Heart right ventricle (tissue), 16 donors: ENCODE measurements at regions of chr16 and their contacts with region 1.

Region 1: DNA sequence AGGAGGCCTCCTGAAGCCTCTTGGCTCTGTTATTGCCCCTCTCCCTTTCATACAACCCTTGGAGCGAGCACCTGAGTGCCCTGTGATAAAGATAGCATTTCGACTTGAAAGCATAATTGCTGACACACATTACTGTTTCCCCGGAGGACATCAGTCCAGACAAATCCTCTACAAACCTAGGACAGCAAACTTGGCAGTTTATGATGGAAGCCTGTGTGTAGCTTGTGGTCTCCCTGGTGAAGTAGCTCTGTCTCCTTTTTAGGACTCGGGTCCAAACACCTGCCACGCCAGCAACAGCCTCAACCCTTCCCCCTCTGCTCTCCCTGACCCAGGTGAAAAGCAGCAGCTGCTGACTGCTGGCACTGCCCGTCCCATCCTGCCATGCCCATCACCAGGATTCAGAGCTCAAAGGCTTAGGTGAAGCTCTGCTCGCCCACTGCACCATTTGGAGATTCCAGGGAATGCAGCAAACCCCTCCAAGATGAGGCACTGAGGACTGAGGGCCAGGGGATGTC is 55.9 kb downstream of the IRX6 start:
- DNase-seq: no peak
- ATAC-seq: peak in 6 of 8 donors; percentile 16 to 59 (median 27)
- H3K4me3 ChIP-seq: no peak overlapping the region
- H3K27ac ChIP-seq: peak overlapping the region in 6 of 10 donors; percentile 55 to 73 (median 66)
- H3K4me1 ChIP-seq: peaks cover 0 to 21% (median 6%) of the 10 kb centered on the region in 9 donors
- H3K27me3 ChIP-seq: no peaks in the 10 kb centered on the region
- CTCF ChIP-seq: no peak

Region 2: GRCh38 chr16:53945996-53946395 is 1433.9 kb before region 1 on chr16:
- intact Hi-C with region 1: loop called in 1 of 10 experiments (anchors 5 kb)
- DNase-seq: no peak
- ATAC-seq: peak in 6 of 8 donors; percentile 60 to 79 (median 68)
- H3K4me3 ChIP-seq: no peak overlapping the region
- H3K27ac ChIP-seq: no peak overlapping the region
- H3K4me1 ChIP-seq: peaks cover 0 to 16% (median 0%) of the 10 kb centered on the region in 9 donors
- H3K27me3 ChIP-seq: no peaks in the 10 kb centered on the region
- CTCF ChIP-seq: peak; percentile 49 to 80 (median 73)